ENCODE measurements at regions of chr3 and their contacts with region 1.

Region 1: GRCh38 chr3:109132801-109133473 is 3.6 kb upstream of the C3orf85 start:
- DNase-seq: peak; percentile 69
- ATAC-seq: peak; percentile 20; the same call in 1 of the 2 replicates
- H3K4me3 ChIP-seq: no peak overlapping the region
- H3K27ac ChIP-seq: peak overlapping the region; percentile 14; the same call in 1 of the 2 replicates
- H3K4me1 ChIP-seq: 0 out of 2 replicates have a peak, but pooled peaks cover 9% of the 10 kb centered on the region
- H3K27me3 ChIP-seq: no peaks in the 10 kb centered on the region
- CTCF ChIP-seq: no peak

Region 2: GRCh38 chr3:108970561-108970960 is 162.4 kb before region 1 on chr3:
- CTCF ChIA-PET with region 1: no interaction called
- POLR2A ChIA-PET with region 1: no interaction called
- intact Hi-C with region 1: no loop called
- DNase-seq: no peak
- ATAC-seq: no peak
- H3K4me3 ChIP-seq: no peak overlapping the region
- H3K27ac ChIP-seq: no peak overlapping the region
- H3K4me1 ChIP-seq: no peaks in the 10 kb centered on the region
- H3K27me3 ChIP-seq: peaks cover 25% of the 10 kb centered on the region
- CTCF ChIP-seq: no peak

Region 3: DNA sequence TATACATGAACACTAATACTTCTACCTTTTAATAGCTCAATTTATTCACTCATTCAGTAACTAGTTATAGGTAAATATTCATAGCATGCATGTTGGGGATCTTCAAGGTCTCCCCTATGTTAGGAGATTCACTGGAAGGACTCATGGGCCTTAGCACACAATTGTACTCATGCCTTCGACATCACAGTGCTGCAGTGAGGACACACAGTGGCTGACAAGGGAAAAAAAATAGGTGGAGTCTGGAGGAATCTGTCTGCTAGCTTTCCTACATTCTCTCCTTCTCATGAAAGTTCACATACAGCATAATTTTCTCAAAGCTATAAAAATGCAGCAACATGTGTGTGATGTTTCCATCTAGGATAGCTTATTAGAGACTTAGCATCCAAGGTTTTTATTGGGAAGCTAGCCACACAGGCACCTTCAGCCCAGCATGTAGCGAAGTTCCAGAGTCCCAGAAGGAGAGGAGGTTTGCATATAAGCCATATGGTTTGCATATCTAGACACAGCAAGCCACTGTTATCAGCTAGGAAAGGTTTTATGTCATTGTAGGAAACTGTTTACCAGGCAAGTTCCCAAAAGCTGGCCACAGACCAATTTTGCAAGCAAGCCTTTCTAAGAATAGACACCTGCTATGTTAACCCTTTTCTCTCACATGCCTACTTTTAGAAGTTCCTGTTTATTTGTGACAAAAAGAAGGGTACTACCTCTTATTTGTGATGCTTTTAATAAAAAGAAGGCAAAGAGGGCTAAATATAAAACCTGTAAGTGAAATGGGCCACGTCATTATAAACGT is 61.4 kb before region 1 on chr3:
- CTCF ChIA-PET with region 1: no interaction called
- POLR2A ChIA-PET with region 1: no interaction called
- intact Hi-C with region 1: no loop called
- DNase-seq: peak; percentile 12
- ATAC-seq: no peak; the same call in none of the 2 replicates
- H3K4me3 ChIP-seq: no peak overlapping the region
- H3K27ac ChIP-seq: no peak overlapping the region
- H3K4me1 ChIP-seq: no peaks in the 10 kb centered on the region
- H3K27me3 ChIP-seq: peaks cover 52% of the 10 kb centered on the region
- CTCF ChIP-seq: peak; percentile 22; the same call in 1 of the 2 replicates

Region 4: GRCh38 chr3:110149763-110150162 is 1016.8 kb after region 1 on chr3:
- CTCF ChIA-PET with region 1: no interaction called
- POLR2A ChIA-PET with region 1: interaction called, 18 read pairs
- intact Hi-C with region 1: no loop called
- DNase-seq: no peak
- ATAC-seq: no peak
- H3K4me3 ChIP-seq: no peak overlapping the region
- H3K27ac ChIP-seq: no peak overlapping the region
- H3K4me1 ChIP-seq: no peaks in the 10 kb centered on the region
- H3K27me3 ChIP-seq: no peaks in the 10 kb centered on the region
- CTCF ChIP-seq: no peak